ENCODE measurements at regions of chr19 and their contacts with region 1.

Region 1: GRCh38 chr19:55516878-55517620 is 19.9 kb downstream of the SBK2 start:
- DNase-seq: peak; percentile 81
- ATAC-seq: peak; percentile 99
- H3K4me3 ChIP-seq: peak overlapping the region; percentile 37 to 51
- H3K27ac ChIP-seq: peak overlapping the region; percentile 84
- H3K4me1 ChIP-seq: peaks cover 7% of the 10 kb centered on the region; the same call in 1 of the 2 replicates
- H3K27me3 ChIP-seq: no peaks in the 10 kb centered on the region
- CTCF ChIP-seq: peak; percentile 98

Region 2: GRCh38 chr19:55605207-55605636 is 88.2 kb after region 1 on chr19:
- CTCF ChIA-PET with region 1: interaction called, 10 read pairs
- POLR2A ChIA-PET with region 1: no interaction called
- in situ Hi-C with region 1: no loop called
- intact Hi-C with region 1: loop called (anchors 2 kb)
- DNase-seq: peak; percentile 97
- ATAC-seq: peak; percentile 88
- H3K4me3 ChIP-seq: peak overlapping the region; percentile 62 to 74
- H3K27ac ChIP-seq: peak overlapping the region; percentile 97
- H3K4me1 ChIP-seq: peaks cover 21% of the 10 kb centered on the region
- H3K27me3 ChIP-seq: no peaks in the 10 kb centered on the region
- CTCF ChIP-seq: no peak

Region 3: GRCh38 chr19:55632463-55632834 is 115.4 kb after region 1 on chr19:
- CTCF ChIA-PET with region 1: interaction called, 4 read pairs
- POLR2A ChIA-PET with region 1: no interaction called
- in situ Hi-C with region 1: no loop called
- intact Hi-C with region 1: loop called (anchors 2 kb)
- DNase-seq: peak; percentile 88
- ATAC-seq: peak; percentile 74
- H3K4me3 ChIP-seq: peak overlapping the region in 1 of 2 experiments; percentile 14; a peak in 1 of 4 replicates
- H3K27ac ChIP-seq: no peak overlapping the region
- H3K4me1 ChIP-seq: peaks cover 16% of the 10 kb centered on the region
- H3K27me3 ChIP-seq: no peaks in the 10 kb centered on the region
- CTCF ChIP-seq: peak; percentile 87

Measured in Panc1 (cell line).